ENCODE measurements at regions of chr12 and their contacts with region 1.

Region 1: DNA sequence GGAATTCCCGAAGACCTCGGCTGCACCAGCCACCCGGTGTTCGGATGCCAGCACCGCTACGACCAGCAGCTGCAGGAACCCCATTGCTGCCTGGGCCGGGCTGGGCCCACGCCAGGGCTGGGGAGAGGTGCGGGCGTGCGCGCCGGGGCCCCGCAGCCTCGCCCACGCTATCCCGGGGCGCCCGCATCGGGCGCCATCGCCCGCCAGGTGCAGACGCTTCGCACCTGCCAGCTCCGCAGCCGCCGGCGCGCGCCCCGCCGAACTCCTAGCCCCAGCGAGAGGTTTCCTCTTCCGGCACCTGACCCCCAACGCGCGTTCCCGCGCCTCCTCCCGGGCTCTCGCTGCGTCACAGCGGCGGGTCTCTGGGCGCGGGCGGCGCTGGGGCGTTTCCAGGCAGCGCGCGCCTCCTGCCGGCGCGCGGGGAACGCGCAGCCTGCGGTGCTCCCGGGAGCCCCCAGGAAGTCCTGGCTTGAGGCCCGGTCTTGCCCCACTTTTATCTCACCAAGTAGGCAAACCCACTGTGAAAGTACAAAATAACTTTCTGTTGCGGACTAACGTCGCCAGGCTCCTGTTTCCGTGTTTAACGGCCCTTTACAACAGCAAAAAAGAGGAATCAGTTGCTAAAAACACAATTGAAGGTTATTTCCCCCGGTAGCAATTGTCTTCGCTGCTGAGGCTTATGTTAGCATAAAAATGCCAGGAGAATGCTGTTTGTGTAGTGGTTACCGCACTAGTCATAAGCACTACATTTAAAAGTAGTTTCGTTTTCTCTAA is at the start of gene TM7SF3:
- DNase-seq: peak; percentile 92 to 98 (median 97)
- ATAC-seq: peak; percentile 84 to 85
- H3K4me3 Mint-ChIP-seq: peak within 1 kb of the TSS; percentile 81 to 97 (median 94)
- H3K27ac Mint-ChIP-seq: peak within 1 kb of the TSS; percentile 91 to 99 (median 96)
- H3K4me1 Mint-ChIP-seq: peaks cover 22 to 53% (median 49%) of the 10 kb centered on the region in 4 donors
- H3K27me3 Mint-ChIP-seq: no peaks in the 10 kb centered on the region
- polyA plus RNA-seq, gene TM7SF3: 44.3 to 62.8 (median 51.4) TPM

Region 2: DNA sequence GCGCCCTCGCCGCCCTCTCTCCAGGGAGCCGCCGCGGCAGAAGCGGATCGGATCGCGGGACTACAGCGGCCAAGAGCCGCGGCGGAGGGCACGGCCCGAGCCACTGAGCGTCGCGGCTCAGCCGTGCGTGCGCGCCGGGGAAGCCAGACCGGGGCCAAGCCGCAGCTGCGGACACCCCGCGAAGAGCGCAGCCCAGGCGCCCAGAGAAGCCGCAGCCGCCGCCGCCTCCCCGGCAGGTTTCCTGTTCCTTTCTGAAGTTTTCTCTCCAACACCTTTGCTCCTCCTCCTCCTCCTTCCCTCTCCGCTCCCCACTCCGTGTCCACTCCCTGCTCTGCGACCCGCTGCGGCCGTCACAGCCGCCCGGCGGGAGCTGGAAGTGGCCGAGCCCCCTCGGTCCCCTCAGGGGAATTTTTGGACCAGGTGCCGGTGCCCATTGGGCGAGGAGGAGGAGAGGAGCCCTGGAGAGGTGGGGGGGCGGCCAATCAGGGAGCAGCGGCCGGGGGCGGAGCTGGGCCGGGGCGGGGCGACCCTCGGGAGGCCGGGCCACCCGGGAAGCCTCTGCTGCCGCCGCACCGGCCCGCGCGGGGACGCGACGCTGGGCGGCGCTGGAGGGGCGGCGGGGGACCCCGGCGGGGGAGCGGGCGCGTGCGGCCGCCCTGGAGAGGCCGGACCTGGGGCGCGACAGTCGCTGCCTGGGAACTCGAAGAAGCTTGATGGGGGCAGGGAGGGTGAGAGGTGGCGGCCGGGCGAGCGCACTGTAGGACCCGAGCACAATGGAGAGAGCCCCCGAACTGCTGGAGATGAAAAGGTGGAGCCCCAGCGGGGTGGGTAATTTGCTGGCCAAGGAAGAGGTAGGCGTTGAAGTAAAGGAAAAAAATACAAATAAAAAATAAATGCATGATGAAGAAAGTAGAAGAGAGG is 181.2 kb before region 1 on chr12 and contains the start of gene ITPR2:
- POLR2A ChIA-PET with region 1: interaction called, 30 read pairs
- DNase-seq: peak; percentile 84 to 94 (median 90)
- ATAC-seq: peak; percentile 87 to 90
- H3K4me3 Mint-ChIP-seq: peak within 1 kb of the TSS; percentile 95 to 99 (median 98)
- H3K27ac Mint-ChIP-seq: peak within 1 kb of the TSS; percentile 98 to 100 (median 98)
- H3K4me1 Mint-ChIP-seq: peaks cover 21 to 52% (median 44%) of the 10 kb centered on the region in 4 donors
- H3K27me3 Mint-ChIP-seq: no peaks in the 10 kb centered on the region
- polyA plus RNA-seq, gene ITPR2: 4.6 to 9.6 (median 8.3) TPM

Region 3: GRCh38 chr12:26963413-26963812 is 50.9 kb before region 1 on chr12:
- POLR2A ChIA-PET with region 1: no interaction called
- DNase-seq: no peak
- ATAC-seq: no peak
- H3K4me3 Mint-ChIP-seq: no peak overlapping the region
- H3K27ac Mint-ChIP-seq: peak overlapping the region in 5 of 10 donors; percentile 1 to 43 (median 20)
- H3K4me1 Mint-ChIP-seq: peaks cover 0 to 7% (median 3%) of the 10 kb centered on the region in 4 donors
- H3K27me3 Mint-ChIP-seq: no peaks in the 10 kb centered on the region

Region 4: GRCh38 chr12:27031531-27031930 is 17.3 kb after region 1 on chr12:
- POLR2A ChIA-PET with region 1: no interaction called
- DNase-seq: no peak
- ATAC-seq: no peak
- H3K4me3 Mint-ChIP-seq: no peak overlapping the region
- H3K27ac Mint-ChIP-seq: peak overlapping the region in 1 of 10 donors; percentile 3
- H3K4me1 Mint-ChIP-seq: peaks cover 0 to 8% (median 2%) of the 10 kb centered on the region in 4 donors
- H3K27me3 Mint-ChIP-seq: no peaks in the 10 kb centered on the region